ENCODE measurements at regions of chr2 and their contacts with region 1.

Region 1: GRCh38 chr2:96344011-96344410 is 8.4 kb downstream of the NCAPH start:
- DNase-seq: peak; percentile 91
- ATAC-seq: peak; percentile 93
- H3K4me3 ChIP-seq: no peak overlapping the region
- H3K27ac ChIP-seq: peak overlapping the region; percentile 65
- H3K4me1 ChIP-seq: peaks cover 55% of the 10 kb centered on the region
- H3K27me3 ChIP-seq: no peaks in the 10 kb centered on the region
- CTCF ChIP-seq: no peak
- EP300 ChIP-seq: peak; percentile 54 to 69; a peak in 3 of 4 replicates
- POLR2A ChIP-seq: no peak
- RAD21 ChIP-seq: no peak

Region 2: DNA sequence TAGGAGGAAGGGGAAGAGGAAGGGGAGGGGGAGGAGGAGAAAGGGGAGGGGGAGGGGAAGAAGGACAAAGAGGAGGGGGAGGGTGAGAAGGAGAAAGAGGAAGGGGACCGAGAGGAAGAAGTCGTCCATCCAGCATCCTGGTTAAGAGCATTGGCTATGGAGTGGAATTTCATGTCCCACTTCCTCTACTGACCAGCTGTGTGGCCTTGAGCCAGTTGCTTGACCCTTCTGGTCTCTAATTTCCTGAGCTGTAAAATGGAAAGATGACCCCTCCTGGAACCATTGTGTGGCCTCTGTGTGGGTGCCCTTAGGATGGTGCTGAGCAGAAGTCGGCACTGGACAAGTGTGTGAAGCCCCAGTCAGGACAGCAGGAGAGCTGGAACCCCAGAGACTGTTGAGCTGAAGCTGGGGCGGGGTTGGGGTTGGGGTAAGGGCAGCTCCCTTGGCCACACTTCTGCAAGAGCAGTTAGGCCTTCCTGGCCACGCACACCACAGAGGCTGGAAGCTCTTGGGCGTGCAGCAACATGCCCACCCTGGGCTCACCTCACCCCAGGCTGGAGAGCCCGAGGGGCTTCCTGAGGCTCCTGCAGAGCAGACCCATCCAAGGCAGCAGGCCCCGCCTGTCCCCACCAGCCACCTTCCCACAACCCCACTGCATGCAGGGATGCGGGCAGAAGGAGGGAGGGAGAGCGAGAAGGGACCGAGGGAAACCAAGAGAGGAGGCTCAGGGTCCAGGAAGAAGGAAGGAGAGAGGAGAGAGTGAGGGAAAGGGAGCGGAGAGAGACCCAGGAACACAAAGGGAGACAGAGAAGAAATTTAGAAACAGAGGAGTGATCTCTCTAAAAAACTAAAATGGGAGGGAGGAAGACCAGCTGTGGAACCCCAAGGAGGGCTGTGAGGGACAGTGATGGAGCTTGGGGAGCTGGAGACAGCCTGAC is 243.9 kb before region 1 on chr2:
- CTCF ChIA-PET with region 1: no interaction called
- POLR2A ChIA-PET with region 1: no interaction called
- RAD21 ChIA-PET with region 1: no interaction called
- SMC1A ChIA-PET with region 1: no interaction called
- in situ Hi-C with region 1: no loop called
- intact Hi-C with region 1: no loop called
- DNase-seq: no peak
- ATAC-seq: peak; percentile 17
- H3K4me3 ChIP-seq: no peak overlapping the region
- H3K27ac ChIP-seq: no peak overlapping the region
- H3K4me1 ChIP-seq: no peaks in the 10 kb centered on the region
- H3K27me3 ChIP-seq: no peaks in the 10 kb centered on the region
- CTCF ChIP-seq: no peak
- EP300 ChIP-seq: no peak
- POLR2A ChIP-seq: no peak
- RAD21 ChIP-seq: no peak

Region 3: DNA sequence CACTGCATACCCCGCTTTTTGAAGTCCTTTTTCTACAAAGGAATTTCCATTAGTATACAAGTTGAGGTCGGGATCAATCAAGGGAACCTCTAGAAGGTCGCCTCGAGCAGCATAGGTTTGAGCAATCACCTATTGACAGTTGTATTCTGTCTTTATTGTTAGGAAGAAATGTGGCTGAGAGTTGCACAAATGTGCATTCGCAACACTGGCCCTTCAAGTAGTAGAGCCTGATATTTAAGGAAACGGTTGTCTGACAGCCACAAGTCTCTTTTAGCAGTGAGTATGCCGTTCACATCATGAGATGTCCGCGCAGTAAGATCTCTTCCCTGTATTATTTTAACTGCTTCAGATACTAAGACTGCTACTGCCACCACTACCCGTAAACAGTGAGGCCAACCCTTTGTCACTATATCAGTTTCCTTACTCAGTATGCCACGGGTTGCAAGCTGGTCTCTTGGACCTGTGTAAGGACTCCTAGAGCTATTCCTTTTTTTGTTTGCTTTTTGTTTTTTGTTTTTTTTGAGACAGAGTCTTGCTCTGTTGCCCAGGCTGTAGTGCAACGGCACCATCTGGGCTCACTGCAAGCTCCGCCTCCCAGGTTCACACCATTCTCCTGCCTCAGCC is 125.4 kb before region 1 on chr2:
- CTCF ChIA-PET with region 1: no interaction called
- POLR2A ChIA-PET with region 1: no interaction called
- RAD21 ChIA-PET with region 1: no interaction called
- SMC1A ChIA-PET with region 1: no interaction called
- in situ Hi-C with region 1: no loop called
- intact Hi-C with region 1: no loop called
- DNase-seq: no peak
- ATAC-seq: no peak
- H3K4me3 ChIP-seq: no peak overlapping the region
- H3K27ac ChIP-seq: no peak overlapping the region
- H3K4me1 ChIP-seq: no peaks in the 10 kb centered on the region
- H3K27me3 ChIP-seq: no peaks in the 10 kb centered on the region
- CTCF ChIP-seq: no peak
- EP300 ChIP-seq: no peak
- POLR2A ChIP-seq: no peak
- RAD21 ChIP-seq: no peak

Region 4: DNA sequence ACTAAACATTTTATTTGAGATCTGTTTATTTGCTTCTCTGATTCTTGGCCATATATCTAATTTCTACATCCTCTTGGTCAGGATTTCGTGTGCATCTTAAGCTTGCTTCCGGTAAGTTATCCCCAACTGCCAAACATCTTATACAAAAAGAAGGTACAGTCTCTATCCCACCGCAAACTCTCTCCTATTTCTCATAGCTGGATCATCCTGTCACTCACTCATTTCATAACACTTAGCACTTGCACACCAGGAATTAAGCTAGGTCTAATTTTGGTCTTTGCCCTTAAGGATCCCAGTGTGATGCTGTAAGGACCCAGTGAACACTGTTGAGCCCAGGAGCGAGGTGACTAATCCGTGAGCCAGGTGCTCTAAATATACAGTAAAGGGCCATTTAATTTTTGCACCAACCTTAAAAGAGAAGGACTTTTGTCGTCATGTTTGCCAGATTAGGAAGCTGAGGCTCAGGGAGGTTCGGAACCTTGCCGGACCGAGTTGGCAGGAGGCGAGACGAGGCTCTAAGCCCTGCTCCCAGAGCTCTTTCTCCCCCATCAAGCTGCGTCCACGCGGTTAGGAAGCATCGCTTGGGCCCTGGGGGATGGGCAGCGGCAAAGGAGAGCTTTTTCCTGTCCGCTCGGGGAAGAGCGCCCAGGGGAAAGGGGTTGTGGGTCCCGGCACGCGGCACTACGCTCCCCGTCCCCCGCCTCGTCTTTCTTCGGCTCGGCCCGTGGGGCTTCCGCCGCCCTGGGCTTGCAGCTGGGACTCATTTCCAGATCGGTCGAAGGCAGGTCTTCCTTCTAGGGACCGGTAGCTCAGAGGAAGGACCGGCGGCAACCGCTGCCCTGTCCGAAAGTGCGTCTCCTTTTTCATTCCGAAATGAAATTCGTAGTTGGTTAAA is 23.0 kb before region 1 on chr2:
- CTCF ChIA-PET with region 1: interaction called, 8 read pairs
- POLR2A ChIA-PET with region 1: interaction called, 26 read pairs
- RAD21 ChIA-PET with region 1: interaction called, 22 read pairs
- SMC1A ChIA-PET with region 1: interaction called, 231 read pairs
- in situ Hi-C with region 1: no loop called
- intact Hi-C with region 1: no loop called
- DNase-seq: no peak
- ATAC-seq: peak; percentile 48
- H3K4me3 ChIP-seq: peak overlapping the region; percentile 90
- H3K27ac ChIP-seq: peak overlapping the region; percentile 88
- H3K4me1 ChIP-seq: peaks cover 30% of the 10 kb centered on the region
- H3K27me3 ChIP-seq: no peaks in the 10 kb centered on the region
- CTCF ChIP-seq: no peak
- EP300 ChIP-seq: no peak
- POLR2A ChIP-seq: no peak; the same call in 1 of the 2 replicates
- RAD21 ChIP-seq: no peak

Measured in GM12878 (cell line).